ENCODE measurements at regions of chr1 and their contacts with region 1.

Region 1: GRCh38 chr1:6245086-6245868 is 1.3 kb downstream of the HES3 start:
- DNase-seq: peak; percentile 61 to 92 (median 76)
- ATAC-seq: peak; percentile 80
- H3K4me3 ChIP-seq: no peak overlapping the region
- H3K4me3 Mint-ChIP-seq: no peak overlapping the region
- H3K27ac ChIP-seq: no peak overlapping the region
- H3K27ac Mint-ChIP-seq: no peak overlapping the region
- H3K4me1 ChIP-seq: peaks cover 35% of the 10 kb centered on the region
- H3K4me1 Mint-ChIP-seq: peaks cover 22% of the 10 kb centered on the region
- H3K27me3 ChIP-seq: peaks cover 74 to 85% of the 10 kb centered on the region in 2 experiments
- H3K27me3 Mint-ChIP-seq: peaks cover 70% of the 10 kb centered on the region
- CTCF ChIP-seq: peak; percentile 58

Region 2: DNA sequence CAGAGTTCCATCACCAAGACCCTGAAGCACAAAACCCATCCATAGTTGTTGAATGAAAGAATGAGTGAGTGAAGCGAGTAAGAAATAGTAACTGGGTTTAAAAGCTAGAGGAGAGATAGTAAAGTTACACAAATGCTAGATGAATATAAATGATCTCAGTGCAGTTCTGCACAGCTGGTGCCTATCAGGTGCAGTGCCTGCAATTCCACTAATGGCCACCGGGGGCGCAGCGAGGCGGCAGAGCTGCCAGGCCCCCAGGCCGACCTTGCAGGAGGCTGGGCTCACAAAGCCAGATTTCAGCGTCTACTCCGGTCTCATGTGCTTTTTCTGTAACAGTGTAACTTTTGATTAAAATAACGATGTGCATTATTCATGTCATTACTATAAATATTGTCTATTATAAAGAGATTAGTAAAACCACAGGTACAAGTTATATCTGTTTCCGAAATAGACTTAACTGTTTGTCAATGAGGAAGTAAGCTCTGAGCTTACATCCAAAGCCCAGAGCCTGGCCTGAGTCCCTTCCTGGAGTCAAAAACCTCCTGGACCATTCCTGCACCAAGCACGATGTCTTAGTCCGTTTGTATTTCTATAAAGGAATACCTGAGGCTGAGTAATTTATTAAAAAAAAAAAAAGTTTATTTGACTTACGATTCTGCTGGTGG is 730.6 kb before region 1 on chr1:
- CTCF ChIA-PET with region 1: no interaction called
- POLR2A ChIA-PET with region 1: no interaction called
- intact Hi-C with region 1: loop called in 1 of 2 experiments (anchors 5 kb)
- DNase-seq: peak; percentile 46 to 80 (median 62)
- ATAC-seq: peak; percentile 37
- H3K4me3 ChIP-seq: no peak overlapping the region
- H3K4me3 Mint-ChIP-seq: no peak overlapping the region
- H3K27ac ChIP-seq: no peak overlapping the region
- H3K27ac Mint-ChIP-seq: no peak overlapping the region
- H3K4me1 ChIP-seq: peaks cover 5% of the 10 kb centered on the region
- H3K4me1 Mint-ChIP-seq: peaks cover 4% of the 10 kb centered on the region
- H3K27me3 ChIP-seq: no peaks in the 10 kb centered on the region
- H3K27me3 Mint-ChIP-seq: peaks cover 17% of the 10 kb centered on the region
- CTCF ChIP-seq: peak; percentile 100

Region 3: GRCh38 chr1:6052543-6053205 is 192.6 kb before region 1 on chr1:
- CTCF ChIA-PET with region 1: no interaction called
- POLR2A ChIA-PET with region 1: no interaction called
- intact Hi-C with region 1: loop called in 1 of 2 experiments (anchors 2 kb)
- DNase-seq: peak; percentile 24 to 72 (median 40)
- ATAC-seq: no peak
- H3K4me3 ChIP-seq: no peak overlapping the region
- H3K4me3 Mint-ChIP-seq: no peak overlapping the region
- H3K27ac ChIP-seq: no peak overlapping the region
- H3K27ac Mint-ChIP-seq: no peak overlapping the region
- H3K4me1 ChIP-seq: peaks cover 17% of the 10 kb centered on the region
- H3K4me1 Mint-ChIP-seq: peaks cover 23% of the 10 kb centered on the region
- H3K27me3 ChIP-seq: no peaks in the 10 kb centered on the region
- H3K27me3 Mint-ChIP-seq: no peaks in the 10 kb centered on the region
- CTCF ChIP-seq: peak; percentile 29

Region 4: DNA sequence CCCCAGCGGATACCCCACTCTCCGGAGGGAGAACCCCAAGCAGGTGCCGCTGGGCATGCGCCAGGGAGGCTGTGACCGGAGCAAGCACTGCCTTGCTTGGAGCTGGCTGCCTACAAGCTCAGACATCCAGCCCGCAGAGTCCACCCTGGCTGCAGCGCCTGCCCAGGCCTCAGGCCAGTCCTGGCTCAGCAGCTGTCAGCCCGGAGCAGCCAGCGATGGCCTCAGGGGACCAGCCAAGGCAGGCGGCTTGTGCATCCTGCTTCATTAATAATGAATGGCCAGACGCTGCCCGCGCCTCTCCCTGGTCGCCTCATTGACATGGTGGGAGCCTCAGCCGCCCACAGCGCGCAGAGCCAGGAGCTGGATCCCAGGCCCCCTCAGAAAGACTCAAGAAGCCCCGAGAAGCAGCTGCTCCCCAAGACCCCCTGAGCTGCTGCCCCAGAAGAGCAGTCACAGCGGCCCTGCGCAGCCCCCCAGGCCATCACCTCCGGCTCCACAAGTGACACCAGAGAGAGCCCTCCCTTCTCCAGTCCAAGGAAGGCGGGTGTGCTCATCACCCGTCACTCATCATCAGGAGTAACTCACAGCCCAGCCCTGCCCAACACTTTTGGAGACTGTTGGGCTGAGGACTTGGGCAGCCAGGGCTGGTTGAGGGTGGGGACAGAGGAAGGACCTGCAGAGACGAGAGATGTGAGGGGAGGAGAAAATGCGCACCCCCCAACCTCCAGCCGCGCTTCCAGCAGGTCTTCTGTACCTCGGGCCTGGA is 180.0 kb before region 1 on chr1:
- CTCF ChIA-PET with region 1: no interaction called
- POLR2A ChIA-PET with region 1: no interaction called
- intact Hi-C with region 1: no loop called
- DNase-seq: no peak
- ATAC-seq: no peak
- H3K4me3 ChIP-seq: no peak overlapping the region
- H3K4me3 Mint-ChIP-seq: no peak overlapping the region
- H3K27ac ChIP-seq: no peak overlapping the region
- H3K27ac Mint-ChIP-seq: no peak overlapping the region
- H3K4me1 ChIP-seq: peaks cover 2% of the 10 kb centered on the region
- H3K4me1 Mint-ChIP-seq: peaks cover 5% of the 10 kb centered on the region
- H3K27me3 ChIP-seq: no peaks in the 10 kb centered on the region
- H3K27me3 Mint-ChIP-seq: no peaks in the 10 kb centered on the region
- CTCF ChIP-seq: no peak

Region 5: GRCh38 chr1:6108937-6109614 is 136.2 kb before region 1 on chr1:
- CTCF ChIA-PET with region 1: no interaction called
- POLR2A ChIA-PET with region 1: no interaction called
- intact Hi-C with region 1: loop called (anchors 2 to 5 kb)
- DNase-seq: peak in 7 of 14 experiments; percentile 15 to 58 (median 28)
- ATAC-seq: peak; percentile 55
- H3K4me3 ChIP-seq: no peak overlapping the region
- H3K4me3 Mint-ChIP-seq: no peak overlapping the region
- H3K27ac ChIP-seq: no peak overlapping the region
- H3K27ac Mint-ChIP-seq: no peak overlapping the region
- H3K4me1 ChIP-seq: no peaks in the 10 kb centered on the region
- H3K4me1 Mint-ChIP-seq: no peaks in the 10 kb centered on the region
- H3K27me3 ChIP-seq: no peaks in the 10 kb centered on the region
- H3K27me3 Mint-ChIP-seq: peaks cover 6% of the 10 kb centered on the region
- CTCF ChIP-seq: no peak

Region 6: GRCh38 chr1:6225651-6226050 is 19.6 kb before region 1 on chr1:
- CTCF ChIA-PET with region 1: no interaction called
- POLR2A ChIA-PET with region 1: no interaction called
- intact Hi-C with region 1: no loop called
- DNase-seq: no peak
- ATAC-seq: no peak
- H3K4me3 ChIP-seq: no peak overlapping the region
- H3K4me3 Mint-ChIP-seq: no peak overlapping the region
- H3K27ac ChIP-seq: no peak overlapping the region
- H3K27ac Mint-ChIP-seq: no peak overlapping the region
- H3K4me1 ChIP-seq: no peaks in the 10 kb centered on the region
- H3K4me1 Mint-ChIP-seq: no peaks in the 10 kb centered on the region
- H3K27me3 ChIP-seq: no peaks in the 10 kb centered on the region
- H3K27me3 Mint-ChIP-seq: no peaks in the 10 kb centered on the region
- CTCF ChIP-seq: no peak

Region 7: GRCh38 chr1:6401673-6402072 is 156.4 kb after region 1 on chr1:
- CTCF ChIA-PET with region 1: interaction called, 6 read pairs
- POLR2A ChIA-PET with region 1: no interaction called
- intact Hi-C with region 1: loop called (anchors 1 kb)
- DNase-seq: peak in 3 of 14 experiments; percentile 28 to 52 (median 30)
- ATAC-seq: no peak
- H3K4me3 ChIP-seq: no peak overlapping the region
- H3K4me3 Mint-ChIP-seq: no peak overlapping the region
- H3K27ac ChIP-seq: no peak overlapping the region
- H3K27ac Mint-ChIP-seq: no peak overlapping the region
- H3K4me1 ChIP-seq: no peaks in the 10 kb centered on the region
- H3K4me1 Mint-ChIP-seq: peaks cover 4% of the 10 kb centered on the region
- H3K27me3 ChIP-seq: peaks cover 0 to 3% of the 10 kb centered on the region in 2 experiments
- H3K27me3 Mint-ChIP-seq: peaks cover 6% of the 10 kb centered on the region
- CTCF ChIP-seq: no peak

Region 8: GRCh38 chr1:6438047-6438525 is 192.8 kb after region 1 on chr1:
- CTCF ChIA-PET with region 1: no interaction called
- POLR2A ChIA-PET with region 1: no interaction called
- intact Hi-C with region 1: loop called in 1 of 2 experiments (anchors 2 kb)
- DNase-seq: peak; percentile 56 to 85 (median 66)
- ATAC-seq: peak; percentile 65
- H3K4me3 ChIP-seq: no peak overlapping the region
- H3K4me3 Mint-ChIP-seq: peak overlapping the region; percentile 65
- H3K27ac ChIP-seq: no peak overlapping the region
- H3K27ac Mint-ChIP-seq: no peak overlapping the region
- H3K4me1 ChIP-seq: peaks cover 15% of the 10 kb centered on the region
- H3K4me1 Mint-ChIP-seq: peaks cover 9% of the 10 kb centered on the region
- H3K27me3 ChIP-seq: peaks cover 10 to 11% of the 10 kb centered on the region in 2 experiments
- H3K27me3 Mint-ChIP-seq: peaks cover 28% of the 10 kb centered on the region
- CTCF ChIP-seq: peak; percentile 97

Region 9: GRCh38 chr1:6711174-6711573 is 465.9 kb after region 1 on chr1:
- CTCF ChIA-PET with region 1: no interaction called
- POLR2A ChIA-PET with region 1: no interaction called
- intact Hi-C with region 1: no loop called
- DNase-seq: no peak
- ATAC-seq: no peak
- H3K4me3 ChIP-seq: no peak overlapping the region
- H3K4me3 Mint-ChIP-seq: no peak overlapping the region
- H3K27ac ChIP-seq: no peak overlapping the region
- H3K27ac Mint-ChIP-seq: no peak overlapping the region
- H3K4me1 ChIP-seq: no peaks in the 10 kb centered on the region
- H3K4me1 Mint-ChIP-seq: no peaks in the 10 kb centered on the region
- H3K27me3 ChIP-seq: no peaks in the 10 kb centered on the region
- H3K27me3 Mint-ChIP-seq: peaks cover 21% of the 10 kb centered on the region
- CTCF ChIP-seq: no peak

Region 10: GRCh38 chr1:6969106-6969505 is 723.8 kb after region 1 on chr1:
- CTCF ChIA-PET with region 1: no interaction called
- POLR2A ChIA-PET with region 1: no interaction called
- intact Hi-C with region 1: no loop called
- DNase-seq: peak in 2 of 14 experiments; percentile 1 to 16
- ATAC-seq: peak; percentile 43
- H3K4me3 ChIP-seq: no peak overlapping the region
- H3K4me3 Mint-ChIP-seq: no peak overlapping the region
- H3K27ac ChIP-seq: no peak overlapping the region
- H3K27ac Mint-ChIP-seq: no peak overlapping the region
- H3K4me1 ChIP-seq: peaks cover 16% of the 10 kb centered on the region
- H3K4me1 Mint-ChIP-seq: peaks cover 24% of the 10 kb centered on the region
- H3K27me3 ChIP-seq: peaks cover 18 to 19% of the 10 kb centered on the region in 2 experiments
- H3K27me3 Mint-ChIP-seq: peaks cover 16% of the 10 kb centered on the region
- CTCF ChIP-seq: no peak

Measured in CD4-positive, alpha-beta T cell (primary cell).